CD8-positive, alpha-beta T cell (primary cell): ENCODE measurements at regions of chr11 and their contacts with region 1.

Region 1: GRCh38 chr11:116691771-116692177 is 81.0 kb downstream of the BUD13 start:
- DNase-seq: peak; percentile 21 to 72 (median 60)
- ATAC-seq: peak; percentile 80
- H3K4me3 ChIP-seq: no peak overlapping the region
- H3K4me3 Mint-ChIP-seq: no peak overlapping the region
- H3K27ac ChIP-seq: no peak overlapping the region
- H3K27ac Mint-ChIP-seq: no peak overlapping the region
- H3K4me1 ChIP-seq: no peaks in the 10 kb centered on the region
- H3K4me1 Mint-ChIP-seq: peaks cover 3% of the 10 kb centered on the region
- H3K27me3 ChIP-seq: no peaks in the 10 kb centered on the region
- H3K27me3 Mint-ChIP-seq: peaks cover 8% of the 10 kb centered on the region
- CTCF ChIP-seq: peak; percentile 65

Region 2: GRCh38 chr11:115334932-115335788 is 1356.6 kb before region 1 on chr11:
- CTCF ChIA-PET with region 1: interaction called, 3 read pairs
- POLR2A ChIA-PET with region 1: no interaction called
- intact Hi-C with region 1: loop called in 1 of 2 experiments (anchors 1 kb)
- DNase-seq: peak in 2 of 9 experiments; percentile 20 to 39
- ATAC-seq: no peak
- H3K4me3 ChIP-seq: no peak overlapping the region
- H3K4me3 Mint-ChIP-seq: no peak overlapping the region
- H3K27ac ChIP-seq: no peak overlapping the region
- H3K27ac Mint-ChIP-seq: no peak overlapping the region
- H3K4me1 ChIP-seq: no peaks in the 10 kb centered on the region
- H3K4me1 Mint-ChIP-seq: no peaks in the 10 kb centered on the region
- H3K27me3 ChIP-seq: no peaks in the 10 kb centered on the region
- H3K27me3 Mint-ChIP-seq: peaks cover 2% of the 10 kb centered on the region
- CTCF ChIP-seq: peak; percentile 49

Region 3: GRCh38 chr11:116217006-116217405 is 474.8 kb before region 1 on chr11:
- CTCF ChIA-PET with region 1: no interaction called
- POLR2A ChIA-PET with region 1: no interaction called
- intact Hi-C with region 1: loop called in 1 of 2 experiments (anchors 5 kb)
- DNase-seq: peak in 3 of 9 experiments; percentile 1 to 12 (median 8)
- ATAC-seq: no peak
- H3K4me3 ChIP-seq: no peak overlapping the region
- H3K4me3 Mint-ChIP-seq: no peak overlapping the region
- H3K27ac ChIP-seq: no peak overlapping the region
- H3K27ac Mint-ChIP-seq: no peak overlapping the region
- H3K4me1 ChIP-seq: no peaks in the 10 kb centered on the region
- H3K4me1 Mint-ChIP-seq: no peaks in the 10 kb centered on the region
- H3K27me3 ChIP-seq: no peaks in the 10 kb centered on the region
- H3K27me3 Mint-ChIP-seq: peaks cover 5% of the 10 kb centered on the region
- CTCF ChIP-seq: no peak

Region 4: GRCh38 chr11:116454020-116454645 is 237.6 kb before region 1 on chr11:
- CTCF ChIA-PET with region 1: interaction called, 7 read pairs
- POLR2A ChIA-PET with region 1: no interaction called
- intact Hi-C with region 1: loop called in 1 of 2 experiments (anchors 2 kb)
- DNase-seq: peak in 2 of 9 experiments; percentile 7 to 12
- ATAC-seq: no peak
- H3K4me3 ChIP-seq: no peak overlapping the region
- H3K4me3 Mint-ChIP-seq: no peak overlapping the region
- H3K27ac ChIP-seq: no peak overlapping the region
- H3K27ac Mint-ChIP-seq: no peak overlapping the region
- H3K4me1 ChIP-seq: no peaks in the 10 kb centered on the region
- H3K4me1 Mint-ChIP-seq: no peaks in the 10 kb centered on the region
- H3K27me3 ChIP-seq: no peaks in the 10 kb centered on the region
- H3K27me3 Mint-ChIP-seq: peaks cover 5% of the 10 kb centered on the region
- CTCF ChIP-seq: no peak